ENCODE measurements at regions of chr18 and their contacts with region 1.

Region 1: DNA sequence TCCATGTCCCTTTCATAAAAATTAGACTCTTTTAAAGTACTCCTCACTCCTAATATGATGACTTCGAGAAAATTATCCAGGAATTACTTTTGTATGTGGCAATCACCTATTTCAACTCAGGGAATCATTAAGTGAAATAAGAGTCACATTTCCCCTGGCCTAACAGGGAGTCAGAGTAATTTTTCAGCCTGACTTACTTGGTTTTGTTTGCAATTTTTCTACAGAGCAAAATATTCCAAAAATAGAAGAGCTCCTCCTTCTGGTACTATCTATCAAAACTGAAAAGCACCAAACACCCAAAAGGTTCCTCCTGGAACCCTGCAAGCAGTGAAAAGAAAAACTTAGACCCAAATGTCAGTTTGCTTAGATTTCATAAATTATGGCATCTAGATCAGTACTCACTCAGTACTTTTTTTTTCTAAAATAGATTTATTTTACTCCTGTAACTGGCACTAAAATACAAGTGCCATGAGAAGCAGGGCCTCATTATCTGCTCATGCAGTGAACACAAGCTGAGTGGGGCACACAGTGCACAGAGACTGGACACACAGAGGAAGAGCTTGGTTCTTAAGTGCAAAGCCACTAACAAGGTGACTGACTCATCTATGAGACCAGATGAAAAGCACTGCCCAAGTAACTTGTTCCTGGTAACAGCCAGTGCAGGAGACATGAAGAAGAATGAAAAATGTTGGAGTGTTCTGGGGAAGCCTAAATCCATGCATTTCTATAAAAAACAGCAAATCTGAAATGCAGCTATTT is 28.7 kb downstream of the ACAA2 start:
- DNase-seq: peak in 1 of 5 donors; percentile 43
- H3K4me3 ChIP-seq: no peak overlapping the region
- H3K4me3 Mint-ChIP-seq: peak overlapping the region in 3 of 8 donors; percentile 40 to 71 (median 53)
- H3K27ac ChIP-seq: no peak overlapping the region
- H3K27ac Mint-ChIP-seq: peak overlapping the region in 5 of 7 donors; percentile 7 to 73 (median 25)
- H3K4me1 ChIP-seq: peaks cover 54% of the 10 kb centered on the region
- H3K4me1 Mint-ChIP-seq: peaks cover 30 to 55% (median 43%) of the 10 kb centered on the region in 4 donors
- H3K27me3 ChIP-seq: no peaks in the 10 kb centered on the region
- H3K27me3 Mint-ChIP-seq: no peaks in the 10 kb centered on the region

Region 2: GRCh38 chr18:49704334-49704733 is 80.3 kb before region 1 on chr18:
- CTCF ChIA-PET with region 1: no interaction called
- POLR2A ChIA-PET with region 1: no interaction called
- intact Hi-C with region 1: no loop called
- DNase-seq: no peak
- H3K4me3 ChIP-seq: no peak overlapping the region
- H3K4me3 Mint-ChIP-seq: no peak overlapping the region
- H3K27ac ChIP-seq: no peak overlapping the region
- H3K27ac Mint-ChIP-seq: no peak overlapping the region
- H3K4me1 ChIP-seq: no peaks in the 10 kb centered on the region
- H3K4me1 Mint-ChIP-seq: no peaks in the 10 kb centered on the region
- H3K27me3 ChIP-seq: no peaks in the 10 kb centered on the region
- H3K27me3 Mint-ChIP-seq: no peaks in the 10 kb centered on the region

Region 3: DNA sequence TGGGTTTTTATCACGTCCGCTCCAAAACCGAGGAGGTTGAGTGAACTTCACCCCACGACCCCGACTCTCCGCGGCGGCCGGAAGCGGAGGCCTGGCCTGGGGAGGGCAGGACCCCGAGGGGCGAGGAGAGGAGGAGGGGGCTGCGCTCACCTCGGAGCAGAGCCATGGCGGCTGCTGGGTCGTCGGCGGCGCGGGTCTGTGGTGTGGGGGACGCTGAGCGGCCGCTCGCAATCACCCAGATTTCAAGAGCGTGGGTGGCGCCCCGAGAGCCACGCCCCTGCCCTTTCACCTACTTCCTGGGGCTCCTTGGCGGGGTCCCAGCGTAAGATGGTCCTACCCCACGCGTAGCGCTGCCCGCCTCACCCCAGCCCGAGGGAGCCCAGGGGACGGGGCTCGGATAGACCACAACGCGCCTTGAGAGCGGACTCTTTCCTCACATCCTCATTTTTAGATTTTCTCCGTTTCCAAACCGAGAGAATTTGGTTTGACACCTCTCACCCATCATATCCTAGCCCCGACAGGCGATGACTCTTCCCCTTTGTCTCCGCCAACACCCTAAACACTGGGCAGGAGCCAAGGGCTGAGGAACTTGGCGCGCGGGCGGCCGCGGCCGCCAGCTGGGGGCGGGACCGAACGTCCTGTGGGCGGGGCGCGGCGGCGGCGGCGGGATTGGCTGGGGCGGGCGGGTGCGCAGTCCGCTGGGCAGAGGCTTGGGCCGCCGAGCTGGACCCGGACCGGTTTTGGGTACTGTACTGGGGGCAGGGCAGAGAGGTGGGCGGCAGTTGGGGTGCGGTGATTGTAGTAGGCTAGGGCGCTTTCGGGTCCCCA is 28.9 kb after region 1 on chr18 and contains the start of gene ACAA2:
- CTCF ChIA-PET with region 1: interaction called, 10 read pairs
- POLR2A ChIA-PET with region 1: interaction called, 10 read pairs
- intact Hi-C with region 1: loop called (anchors 1 kb)
- DNase-seq: peak; percentile 68 to 84 (median 70)
- H3K4me3 ChIP-seq: peak within 1 kb of the TSS; percentile 88 to 90
- H3K4me3 Mint-ChIP-seq: peak within 1 kb of the TSS; percentile 95 to 100 (median 96)
- H3K27ac ChIP-seq: peak within 1 kb of the TSS; percentile 80
- H3K27ac Mint-ChIP-seq: peak within 1 kb of the TSS; percentile 91 to 99 (median 97)
- H3K4me1 ChIP-seq: peaks cover 51% of the 10 kb centered on the region
- H3K4me1 Mint-ChIP-seq: peaks cover 39 to 69% (median 53%) of the 10 kb centered on the region in 4 donors
- H3K27me3 ChIP-seq: no peaks in the 10 kb centered on the region
- H3K27me3 Mint-ChIP-seq: no peaks in the 10 kb centered on the region
- total RNA-seq, gene ACAA2: 21.8 to 23.8 TPM

Region 4: DNA sequence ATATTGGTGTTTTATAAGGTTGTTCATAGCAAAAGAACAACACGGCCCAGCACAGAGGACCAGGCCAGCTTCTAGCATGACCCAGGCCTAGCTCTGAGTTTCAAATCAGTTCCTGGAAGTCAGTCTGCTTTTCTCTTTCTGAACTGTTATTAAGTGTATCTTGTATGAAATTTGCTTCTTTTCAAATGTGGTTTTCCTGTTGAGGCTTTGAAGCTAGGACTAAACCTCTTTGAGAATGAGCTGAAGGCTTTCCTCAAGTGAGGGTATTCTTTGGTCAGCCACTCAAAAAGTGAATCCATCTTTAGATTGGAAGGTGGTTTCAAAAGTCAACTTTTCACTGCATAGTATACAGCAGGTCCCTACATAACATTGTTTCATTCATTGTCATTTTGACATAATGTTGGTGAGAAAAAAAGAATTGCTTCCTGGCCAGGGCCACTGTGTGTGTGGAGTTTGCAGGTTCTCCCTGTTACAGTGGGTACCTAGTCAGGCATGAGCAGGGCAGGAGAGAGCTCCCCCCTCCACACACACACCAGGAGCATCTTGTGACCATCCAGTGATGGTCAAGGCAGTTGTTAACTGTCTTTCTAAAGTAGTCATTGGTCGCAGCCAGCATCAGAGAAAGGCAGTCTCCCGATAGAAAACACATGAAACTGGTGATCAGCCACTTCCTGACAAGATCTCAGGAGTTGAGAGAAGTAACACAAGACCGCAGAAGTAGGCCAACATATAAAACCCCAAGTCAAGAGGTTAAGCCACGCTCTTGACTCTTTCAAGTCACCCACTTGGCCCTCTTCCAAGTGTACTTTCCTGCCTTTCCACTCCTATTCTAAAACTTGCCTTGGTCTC is 35.4 kb after region 1 on chr18:
- CTCF ChIA-PET with region 1: interaction called, 3 read pairs
- POLR2A ChIA-PET with region 1: interaction called, 10 read pairs
- intact Hi-C with region 1: loop called (anchors 2 kb)
- DNase-seq: peak; percentile 74 to 82 (median 77)
- H3K4me3 ChIP-seq: peak overlapping the region in 1 of 2 donors; percentile 25
- H3K4me3 Mint-ChIP-seq: peak overlapping the region; percentile 67 to 84 (median 76)
- H3K27ac ChIP-seq: peak overlapping the region; percentile 36
- H3K27ac Mint-ChIP-seq: peak overlapping the region; percentile 86 to 93 (median 87)
- H3K4me1 ChIP-seq: peaks cover 53% of the 10 kb centered on the region
- H3K4me1 Mint-ChIP-seq: peaks cover 43 to 67% (median 54%) of the 10 kb centered on the region in 4 donors
- H3K27me3 ChIP-seq: no peaks in the 10 kb centered on the region
- H3K27me3 Mint-ChIP-seq: no peaks in the 10 kb centered on the region